ENCODE measurements at regions of chrX and their contacts with region 1.

Region 1: DNA sequence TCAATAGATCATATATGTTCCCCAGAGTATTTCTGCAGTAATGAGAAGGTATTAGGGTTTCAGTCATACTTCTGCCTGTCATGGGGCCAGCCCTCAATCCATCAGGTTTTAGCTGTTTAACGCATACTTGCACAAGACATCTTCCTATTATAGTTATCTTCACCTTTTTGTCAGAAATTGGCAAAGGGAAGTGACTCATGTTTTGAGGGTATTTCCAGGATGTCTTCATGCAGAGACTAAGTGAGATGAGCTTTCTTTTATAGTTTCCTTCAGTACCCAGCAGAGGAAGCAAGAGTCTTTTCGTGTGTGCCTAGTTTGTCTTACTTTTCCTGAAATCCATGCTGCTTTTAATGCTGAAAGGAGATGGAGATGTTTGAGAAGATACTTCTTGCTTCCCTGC is 9.5 kb downstream of the CSTF2 start:
- DNase-seq: peak; percentile 66
- H3K4me3 Mint-ChIP-seq: peak overlapping the region; percentile 81
- H3K27ac Mint-ChIP-seq: peak overlapping the region; percentile 97
- H3K4me1 Mint-ChIP-seq: peaks cover 24% of the 10 kb centered on the region
- H3K27me3 Mint-ChIP-seq: no peaks in the 10 kb centered on the region

Region 2: DNA sequence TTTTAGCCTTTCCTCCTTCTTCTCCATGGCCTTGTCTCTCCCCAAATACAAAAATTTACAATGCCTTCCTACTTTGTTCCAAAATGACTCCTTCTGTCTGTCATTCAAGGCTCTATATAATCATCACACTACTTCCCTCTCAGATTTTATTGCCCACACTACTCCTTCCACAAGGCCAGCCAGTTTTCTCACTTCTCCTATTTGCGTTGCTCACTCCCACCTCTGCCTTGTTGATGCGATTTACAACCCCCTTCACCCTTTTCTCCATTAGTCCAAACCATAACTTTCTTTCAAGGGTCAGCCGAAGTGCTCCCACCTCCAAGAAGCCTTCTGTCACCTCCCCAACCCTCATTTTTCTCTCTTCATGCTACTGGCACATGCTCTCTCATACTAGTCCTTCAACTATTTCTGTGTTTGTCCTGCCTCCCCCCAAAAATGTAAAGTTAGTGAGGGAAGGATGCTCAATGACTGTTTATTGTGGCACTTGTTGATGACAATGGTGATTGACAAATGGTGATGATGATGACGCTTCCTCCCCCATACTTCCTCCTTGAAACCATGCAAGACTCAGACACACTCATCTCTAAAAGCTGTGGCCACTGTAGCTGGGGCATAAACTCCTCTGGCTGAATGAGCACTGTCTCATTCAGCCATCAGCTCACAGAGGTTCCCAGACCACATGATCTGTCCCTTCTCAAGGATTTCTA is 101.6 kb after region 1 on chrX:
- intact Hi-C with region 1: loop called (anchors 5 kb)
- DNase-seq: peak; percentile 53
- H3K4me3 Mint-ChIP-seq: peak overlapping the region; percentile 40
- H3K27ac Mint-ChIP-seq: peak overlapping the region; percentile 87
- H3K4me1 Mint-ChIP-seq: peaks cover 16% of the 10 kb centered on the region
- H3K27me3 Mint-ChIP-seq: peaks cover 3% of the 10 kb centered on the region